Astrocyte of the cerebellum (primary cell): ENCODE measurements at regions of chr14 and their contacts with region 1.

Region 1: GRCh38 chr14:66238969-66239368 is 247.2 kb upstream of the CCDC196 start:
- DNase-seq: no peak
- H3K4me3 ChIP-seq: no peak overlapping the region
- CTCF ChIP-seq: no peak

Region 2: GRCh38 chr14:66117585-66117984 is 121.4 kb before region 1 on chr14:
- in situ Hi-C with region 1: no loop called
- DNase-seq: peak; percentile 62
- H3K4me3 ChIP-seq: no peak overlapping the region
- CTCF ChIP-seq: no peak

Region 3: DNA sequence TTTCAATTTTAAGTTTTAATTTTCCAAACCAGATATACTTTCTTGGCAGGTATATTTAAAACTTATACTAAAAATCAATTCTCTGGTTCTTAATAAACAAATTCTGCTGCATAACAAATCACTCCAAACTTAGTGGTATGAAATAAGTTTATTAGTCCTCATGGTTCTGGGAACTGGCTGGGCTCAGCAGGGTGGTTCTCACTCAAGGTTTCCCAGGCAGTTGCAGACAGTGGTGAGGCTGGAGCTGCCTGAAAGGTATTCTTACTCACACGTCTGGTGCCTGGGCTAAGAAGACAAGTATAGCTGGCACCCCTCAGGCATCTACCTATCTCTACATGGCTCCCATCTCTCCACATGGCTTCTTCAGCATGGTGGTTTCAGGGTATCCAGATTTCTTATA is 61.0 kb before region 1 on chr14:
- in situ Hi-C with region 1: loop called (anchors 5 kb)
- DNase-seq: no peak
- H3K4me3 ChIP-seq: no peak overlapping the region
- CTCF ChIP-seq: no peak